ENCODE measurements at regions of chr6 and their contacts with region 1.

Region 1: DNA sequence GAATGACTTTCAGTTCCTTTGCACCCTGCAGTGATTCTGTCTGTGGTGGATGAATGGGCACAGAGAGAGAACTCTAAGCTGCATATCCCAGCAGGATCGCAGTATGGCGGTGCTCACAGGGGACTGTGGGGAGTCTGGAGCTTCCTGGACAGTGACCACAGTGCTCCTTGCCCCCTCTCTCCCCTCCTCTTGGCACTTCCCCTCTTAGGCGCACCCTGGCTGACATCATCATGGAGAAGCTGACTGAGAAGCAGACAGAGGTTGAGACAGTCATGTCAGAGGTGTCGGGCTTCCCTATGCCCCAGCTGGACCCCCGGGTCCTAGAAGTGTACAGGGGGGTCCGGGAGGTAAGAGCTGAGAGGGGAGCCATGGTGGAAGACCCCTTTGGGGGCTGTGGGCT is 8.6 kb downstream of the BYSL start:
- DNase-seq: no peak
- CTCF ChIP-seq: no peak

Region 2: DNA sequence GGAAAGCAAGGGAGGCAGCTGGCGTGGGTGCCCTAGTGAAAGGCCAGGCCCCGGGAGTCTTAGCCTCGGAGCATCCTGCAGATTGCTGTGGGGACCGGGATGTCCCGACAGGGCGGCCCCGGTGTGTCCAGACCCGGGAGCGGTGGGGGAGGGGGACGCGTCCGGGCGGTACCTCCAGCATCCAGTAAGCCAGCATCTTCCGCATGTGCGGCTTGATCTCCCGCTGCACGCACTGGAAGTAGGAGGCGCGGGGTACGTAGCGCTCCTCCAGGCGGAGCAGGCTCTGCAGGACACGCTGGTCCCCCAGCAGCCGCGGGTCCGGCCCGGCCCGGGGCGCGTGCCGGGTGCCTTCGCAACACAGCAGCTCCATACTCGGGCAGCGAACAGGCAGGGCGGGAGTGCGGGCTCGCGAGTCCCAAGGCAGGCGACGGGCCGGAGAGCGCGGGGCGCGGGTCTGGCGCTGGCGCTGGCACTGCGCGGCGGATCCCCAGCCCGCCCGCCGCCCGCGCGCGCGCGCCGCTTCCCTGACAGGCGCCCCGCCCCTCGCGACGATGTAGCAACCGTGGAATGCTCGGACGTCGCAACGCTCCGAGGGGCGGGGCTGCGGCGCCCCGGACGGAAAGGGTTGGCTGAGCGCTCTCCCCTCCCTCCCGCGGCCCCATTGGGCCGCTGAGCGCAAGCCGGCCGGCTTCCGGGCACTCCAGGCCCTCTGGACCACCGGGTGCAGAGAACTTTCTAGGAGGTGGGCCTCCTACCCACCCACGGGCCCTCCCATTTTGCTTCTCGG is 11.5 kb after region 1 on chr6 and contains the start of gene CCND3:
- CTCF ChIA-PET with region 1: interaction called, 116 read pairs
- POLR2A ChIA-PET with region 1: interaction called, 3 read pairs
- DNase-seq: peak; percentile 94
- CTCF ChIP-seq: no peak

Measured in GM10248 (cell line).